Activated naive CD4-positive, alpha-beta T cell treated with anti-CD3 and anti-CD28 coated beads for 36 hours (primary cell): ENCODE measurements at regions of chr7 and their contacts with region 1.

Region 1: GRCh38 chr7:81499262-81500116 is 270.4 kb downstream of the HGF start:
- DNase-seq: no peak
- H3K4me3 Mint-ChIP-seq: no peak overlapping the region
- H3K27ac Mint-ChIP-seq: no peak overlapping the region
- H3K4me1 Mint-ChIP-seq: no peaks in the 10 kb centered on the region
- H3K27me3 Mint-ChIP-seq: no peaks in the 10 kb centered on the region

Region 2: GRCh38 chr7:81956520-81956919 is 457.0 kb after region 1 on chr7:
- CTCF ChIA-PET with region 1: no interaction called
- intact Hi-C with region 1: loop called (anchors 5 kb)
- DNase-seq: no peak
- H3K4me3 Mint-ChIP-seq: no peak overlapping the region
- H3K27ac Mint-ChIP-seq: no peak overlapping the region
- H3K4me1 Mint-ChIP-seq: no peaks in the 10 kb centered on the region
- H3K27me3 Mint-ChIP-seq: no peaks in the 10 kb centered on the region

Region 3: DNA sequence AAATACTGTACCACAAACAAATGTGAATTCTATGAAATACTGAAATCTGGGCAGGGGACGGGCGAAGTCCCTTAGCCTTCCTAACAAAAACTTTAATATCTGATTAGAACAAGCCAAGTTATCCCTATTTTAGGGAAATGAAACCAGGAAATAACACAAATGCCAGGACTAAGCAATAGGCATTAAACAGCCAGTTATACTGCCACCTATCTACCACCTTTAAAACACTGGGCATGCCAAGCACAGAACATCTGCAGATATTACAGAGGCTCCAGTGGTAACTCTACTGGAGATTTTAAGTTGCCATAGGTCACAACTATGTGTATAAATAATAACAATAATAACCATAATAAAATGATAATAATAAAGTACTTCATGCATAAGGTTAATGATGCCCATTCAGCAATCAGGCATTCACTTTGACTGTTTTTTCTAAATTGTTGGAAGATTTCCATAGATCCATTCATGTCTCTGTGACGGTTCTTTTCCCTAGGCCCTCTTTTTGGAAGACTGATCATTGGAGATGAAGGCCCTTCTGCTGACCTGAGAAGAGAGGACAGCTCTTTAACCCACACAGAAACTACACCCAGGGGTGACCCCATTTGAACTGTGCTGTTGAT is 748.4 kb after region 1 on chr7:
- CTCF ChIA-PET with region 1: no interaction called
- intact Hi-C with region 1: no loop called
- DNase-seq: no peak
- H3K4me3 Mint-ChIP-seq: no peak overlapping the region
- H3K27ac Mint-ChIP-seq: no peak overlapping the region
- H3K4me1 Mint-ChIP-seq: no peaks in the 10 kb centered on the region
- H3K27me3 Mint-ChIP-seq: no peaks in the 10 kb centered on the region

Region 4: GRCh38 chr7:82677493-82677892 is 1178.0 kb after region 1 on chr7:
- CTCF ChIA-PET with region 1: no interaction called
- intact Hi-C with region 1: no loop called
- DNase-seq: peak; percentile 65
- H3K4me3 Mint-ChIP-seq: no peak overlapping the region
- H3K27ac Mint-ChIP-seq: peak overlapping the region; percentile 75
- H3K4me1 Mint-ChIP-seq: peaks cover 16% of the 10 kb centered on the region
- H3K27me3 Mint-ChIP-seq: no peaks in the 10 kb centered on the region